ENCODE measurements at regions of chr3 and their contacts with region 1.

Region 1: DNA sequence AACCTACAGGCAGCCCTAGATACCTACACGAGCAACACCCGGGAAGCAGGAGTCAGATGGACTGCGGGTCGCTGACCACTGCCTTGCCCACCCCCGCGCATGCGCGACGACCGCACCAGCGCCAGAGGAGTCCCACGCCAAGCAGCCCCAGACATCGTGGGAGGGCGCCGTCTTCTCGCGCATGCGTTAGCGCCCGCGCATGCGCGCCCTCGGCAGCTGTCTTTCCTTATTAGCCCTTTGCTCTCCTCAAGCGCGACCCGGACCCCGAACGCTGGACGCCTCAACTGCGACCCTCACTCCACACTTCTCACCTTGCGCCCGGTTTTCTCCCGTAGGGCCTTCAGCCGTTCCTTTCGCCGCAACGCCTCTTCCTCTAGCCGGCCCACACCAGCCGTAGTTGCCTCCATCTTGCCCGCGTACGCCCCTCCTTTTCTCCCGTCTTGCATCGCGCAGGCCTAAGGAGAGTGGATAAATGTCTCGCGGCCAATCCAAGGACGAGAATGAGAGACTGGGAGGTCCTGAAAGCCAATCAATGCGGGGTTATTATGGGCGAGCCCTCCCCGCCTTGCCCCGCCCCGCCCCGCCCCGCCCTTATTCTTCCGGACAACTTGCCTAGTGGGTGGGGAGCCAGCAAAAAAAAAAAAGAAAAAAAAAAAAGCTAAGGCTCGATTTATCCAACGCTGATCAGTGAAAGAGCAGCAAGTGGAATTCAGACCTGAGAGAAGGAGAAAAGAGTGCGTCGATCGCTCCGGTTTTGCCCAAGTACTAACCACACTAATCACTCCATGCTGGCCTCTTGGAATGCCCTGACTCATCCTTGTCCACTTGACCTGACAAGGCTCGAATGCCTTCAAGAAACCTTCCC is at the start of gene CCDC12:
- DNase-seq: peak; percentile 79 to 98 (median 96)
- ATAC-seq: peak; percentile 87
- H3K4me3 ChIP-seq: peak within 1 kb of the TSS; percentile 98
- H3K4me3 Mint-ChIP-seq: peak within 1 kb of the TSS; percentile 95 to 100 (median 99)
- H3K27ac ChIP-seq: peak within 1 kb of the TSS; percentile 90
- H3K27ac Mint-ChIP-seq: peak within 1 kb of the TSS; percentile 94 to 99 (median 98)
- H3K4me1 ChIP-seq: peaks cover 46 to 53% of the 10 kb centered on the region in 2 donors
- H3K4me1 Mint-ChIP-seq: peaks cover 44 to 82% (median 63%) of the 10 kb centered on the region in 7 donors
- H3K27me3 ChIP-seq: no peaks in the 10 kb centered on the region
- H3K27me3 Mint-ChIP-seq: no peaks in the 10 kb centered on the region
- total RNA-seq, gene CCDC12: 51.6 to 61.5 (median 56.9) TPM

Region 2: DNA sequence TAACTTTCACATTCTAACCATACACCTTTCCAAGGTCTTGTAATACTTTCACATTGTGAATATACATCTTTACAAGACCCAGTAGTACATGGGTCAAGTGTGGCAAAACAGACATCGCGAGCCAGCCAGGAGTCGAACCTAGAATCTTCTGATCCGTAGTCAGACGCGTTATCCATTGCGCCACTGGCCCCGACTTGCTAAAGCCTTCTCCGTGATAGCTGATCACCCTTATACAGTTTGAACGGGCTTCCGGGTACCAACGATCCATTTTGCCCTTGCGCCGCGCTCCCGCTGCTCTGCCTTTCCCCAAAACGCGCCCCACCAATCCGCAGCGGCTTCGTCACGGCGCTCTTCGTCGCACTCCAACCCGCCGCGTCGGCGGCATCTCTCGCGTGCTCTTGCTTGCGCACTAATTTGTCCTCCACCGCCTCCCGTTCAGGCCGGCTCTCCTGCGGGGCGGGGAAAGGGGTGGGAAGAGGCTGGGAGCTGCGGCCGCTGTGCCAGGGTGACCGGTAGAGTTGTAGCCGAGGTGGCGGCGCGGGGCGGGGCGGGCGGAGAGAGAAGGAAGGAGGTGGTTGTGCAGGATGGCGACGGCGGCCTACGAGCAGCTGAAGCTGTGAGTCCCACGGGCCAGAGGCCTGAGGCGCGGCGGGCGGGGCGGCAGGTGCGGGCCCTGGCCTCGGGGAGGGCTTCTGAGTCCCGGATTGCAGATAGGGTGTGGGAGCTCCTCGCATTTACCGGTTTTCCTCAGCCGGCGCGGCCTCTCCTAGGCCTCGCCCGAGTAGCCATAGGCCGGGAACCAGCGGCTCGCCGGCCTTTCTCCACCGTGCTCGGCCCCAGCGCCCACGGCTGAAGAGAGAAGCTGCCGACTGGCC is 1287.4 kb before region 1 on chr3 and contains the start of gene SACM1L:
- CTCF ChIA-PET with region 1: no interaction called
- POLR2A ChIA-PET with region 1: no interaction called
- intact Hi-C with region 1: loop called in 1 of 2 experiments (anchors 5 kb)
- DNase-seq: peak; percentile 84 to 97 (median 95)
- ATAC-seq: peak; percentile 90
- H3K4me3 ChIP-seq: peak within 1 kb of the TSS; percentile 80
- H3K4me3 Mint-ChIP-seq: peak within 1 kb of the TSS; percentile 87 to 98 (median 95)
- H3K27ac ChIP-seq: peak within 1 kb of the TSS; percentile 96
- H3K27ac Mint-ChIP-seq: peak within 1 kb of the TSS; percentile 96 to 100 (median 99)
- H3K4me1 ChIP-seq: peaks cover 38 to 39% of the 10 kb centered on the region in 2 donors
- H3K4me1 Mint-ChIP-seq: peaks cover 40 to 74% (median 67%) of the 10 kb centered on the region in 7 donors
- H3K27me3 ChIP-seq: no peaks in the 10 kb centered on the region
- H3K27me3 Mint-ChIP-seq: peaks cover 0 to 5% (median 0%) of the 10 kb centered on the region in 5 donors
- total RNA-seq, gene SACM1L: 60.8 to 93.8 (median 70.5) TPM

Region 3: GRCh38 chr3:45712472-45713110 is 1264.0 kb before region 1 on chr3:
- CTCF ChIA-PET with region 1: no interaction called
- POLR2A ChIA-PET with region 1: no interaction called
- intact Hi-C with region 1: no loop called
- DNase-seq: no peak
- ATAC-seq: no peak
- H3K4me3 ChIP-seq: no peak overlapping the region
- H3K4me3 Mint-ChIP-seq: no peak overlapping the region
- H3K27ac ChIP-seq: no peak overlapping the region
- H3K27ac Mint-ChIP-seq: peak overlapping the region in 4 of 9 donors; percentile 3 to 81 (median 34)
- H3K4me1 ChIP-seq: no peaks in the 10 kb centered on the region
- H3K4me1 Mint-ChIP-seq: peaks cover 15 to 29% (median 26%) of the 10 kb centered on the region in 7 donors
- H3K27me3 ChIP-seq: no peaks in the 10 kb centered on the region
- H3K27me3 Mint-ChIP-seq: no peaks in the 10 kb centered on the region

Region 4: GRCh38 chr3:46359733-46360493 is 616.6 kb before region 1 on chr3:
- CTCF ChIA-PET with region 1: no interaction called
- POLR2A ChIA-PET with region 1: no interaction called
- intact Hi-C with region 1: no loop called
- DNase-seq: no peak
- ATAC-seq: peak; percentile 37
- H3K4me3 ChIP-seq: no peak overlapping the region
- H3K4me3 Mint-ChIP-seq: no peak overlapping the region
- H3K27ac ChIP-seq: no peak overlapping the region
- H3K27ac Mint-ChIP-seq: no peak overlapping the region
- H3K4me1 ChIP-seq: peaks cover 3 to 39% of the 10 kb centered on the region in 2 donors
- H3K4me1 Mint-ChIP-seq: peaks cover 0 to 59% (median 13%) of the 10 kb centered on the region in 7 donors
- H3K27me3 ChIP-seq: no peaks in the 10 kb centered on the region
- H3K27me3 Mint-ChIP-seq: peaks cover 0 to 65% (median 5%) of the 10 kb centered on the region in 5 donors

Region 5: GRCh38 chr3:46759239-46760167 is 217.1 kb before region 1 on chr3:
- CTCF ChIA-PET with region 1: no interaction called
- POLR2A ChIA-PET with region 1: no interaction called
- intact Hi-C with region 1: no loop called
- DNase-seq: no peak
- ATAC-seq: no peak
- H3K4me3 ChIP-seq: no peak overlapping the region
- H3K4me3 Mint-ChIP-seq: no peak overlapping the region
- H3K27ac ChIP-seq: no peak overlapping the region
- H3K27ac Mint-ChIP-seq: no peak overlapping the region
- H3K4me1 ChIP-seq: no peaks in the 10 kb centered on the region
- H3K4me1 Mint-ChIP-seq: no peaks in the 10 kb centered on the region
- H3K27me3 ChIP-seq: no peaks in the 10 kb centered on the region
- H3K27me3 Mint-ChIP-seq: peaks cover 7 to 33% (median 9%) of the 10 kb centered on the region in 5 donors

Region 6: DNA sequence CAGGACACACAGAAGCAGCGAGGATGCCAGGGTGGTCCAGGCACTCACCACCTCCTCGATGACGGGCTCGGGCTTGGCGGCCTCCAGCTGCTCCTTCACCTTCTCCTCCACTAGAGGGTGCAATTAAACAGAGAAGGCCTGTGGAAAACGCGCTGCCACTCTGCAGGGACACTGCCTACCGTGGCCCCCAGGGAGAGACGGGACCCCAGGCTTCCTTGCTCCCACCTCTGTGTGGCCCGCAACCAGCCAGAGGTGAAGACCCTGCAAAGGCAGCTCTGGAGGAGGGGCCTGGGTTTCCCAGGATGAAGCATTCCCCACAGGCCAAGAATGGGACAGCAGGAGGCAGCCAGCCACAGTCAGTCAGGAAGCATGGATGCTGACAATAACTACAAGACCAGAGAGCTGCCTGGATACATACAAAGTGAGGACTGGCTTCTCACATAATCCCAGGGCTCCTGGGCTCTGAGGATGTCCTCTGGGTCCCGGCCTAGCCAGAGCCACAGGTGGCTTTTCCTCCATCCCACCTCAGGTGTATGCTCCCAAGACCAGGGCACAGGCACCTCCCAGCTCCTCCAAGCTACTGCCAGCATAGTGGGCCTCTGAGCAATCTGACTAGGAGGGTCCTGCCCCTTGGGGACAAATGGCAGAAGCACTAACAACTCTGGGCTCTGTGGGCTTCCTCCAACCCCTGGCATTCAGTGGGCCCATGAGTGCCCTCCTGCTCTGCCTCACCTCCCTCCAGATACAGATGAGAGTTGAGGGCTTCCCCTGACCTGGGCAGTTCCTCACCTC is 52.8 kb before region 1 on chr3:
- CTCF ChIA-PET with region 1: interaction called, 3 read pairs
- POLR2A ChIA-PET with region 1: no interaction called
- intact Hi-C with region 1: loop called in 1 of 2 experiments (anchors 5 kb)
- DNase-seq: peak in 6 of 9 donors; percentile 18 to 52 (median 44)
- ATAC-seq: peak; percentile 61
- H3K4me3 ChIP-seq: no peak overlapping the region
- H3K4me3 Mint-ChIP-seq: no peak overlapping the region
- H3K27ac ChIP-seq: no peak overlapping the region
- H3K27ac Mint-ChIP-seq: peak overlapping the region in 5 of 9 donors; percentile 31 to 54 (median 43)
- H3K4me1 ChIP-seq: peaks cover 19 to 30% of the 10 kb centered on the region in 2 donors
- H3K4me1 Mint-ChIP-seq: peaks cover 13 to 40% (median 28%) of the 10 kb centered on the region in 7 donors
- H3K27me3 ChIP-seq: no peaks in the 10 kb centered on the region
- H3K27me3 Mint-ChIP-seq: no peaks in the 10 kb centered on the region

Region 7: GRCh38 chr3:46998121-46998851 is 21.7 kb after region 1 on chr3:
- CTCF ChIA-PET with region 1: interaction called, 9 read pairs
- POLR2A ChIA-PET with region 1: interaction called, 5 read pairs
- intact Hi-C with region 1: loop called (anchors 1 kb)
- DNase-seq: peak; percentile 53 to 84 (median 69)
- ATAC-seq: peak; percentile 85
- H3K4me3 ChIP-seq: no peak overlapping the region
- H3K4me3 Mint-ChIP-seq: no peak overlapping the region
- H3K27ac ChIP-seq: no peak overlapping the region
- H3K27ac Mint-ChIP-seq: peak overlapping the region in 5 of 9 donors; percentile 41 to 79 (median 55)
- H3K4me1 ChIP-seq: peaks cover 0 to 10% of the 10 kb centered on the region in 2 donors
- H3K4me1 Mint-ChIP-seq: peaks cover 7 to 18% (median 11%) of the 10 kb centered on the region in 7 donors
- H3K27me3 ChIP-seq: no peaks in the 10 kb centered on the region
- H3K27me3 Mint-ChIP-seq: no peaks in the 10 kb centered on the region

Region 8: GRCh38 chr3:47057212-47057671 is 80.7 kb after region 1 on chr3:
- CTCF ChIA-PET with region 1: no interaction called
- POLR2A ChIA-PET with region 1: interaction called, 3 read pairs
- intact Hi-C with region 1: loop called in 1 of 2 experiments (anchors 5 kb)
- DNase-seq: peak in 8 of 9 donors; percentile 32 to 75 (median 58)
- ATAC-seq: peak; percentile 88
- H3K4me3 ChIP-seq: no peak overlapping the region
- H3K4me3 Mint-ChIP-seq: peak overlapping the region in 9 of 10 donors; percentile 15 to 60 (median 45)
- H3K27ac ChIP-seq: peak overlapping the region; percentile 23
- H3K27ac Mint-ChIP-seq: peak overlapping the region; percentile 51 to 91 (median 85)
- H3K4me1 ChIP-seq: peaks cover 15 to 18% of the 10 kb centered on the region in 2 donors
- H3K4me1 Mint-ChIP-seq: peaks cover 23 to 60% (median 47%) of the 10 kb centered on the region in 7 donors
- H3K27me3 ChIP-seq: no peaks in the 10 kb centered on the region
- H3K27me3 Mint-ChIP-seq: no peaks in the 10 kb centered on the region

Region 9: DNA sequence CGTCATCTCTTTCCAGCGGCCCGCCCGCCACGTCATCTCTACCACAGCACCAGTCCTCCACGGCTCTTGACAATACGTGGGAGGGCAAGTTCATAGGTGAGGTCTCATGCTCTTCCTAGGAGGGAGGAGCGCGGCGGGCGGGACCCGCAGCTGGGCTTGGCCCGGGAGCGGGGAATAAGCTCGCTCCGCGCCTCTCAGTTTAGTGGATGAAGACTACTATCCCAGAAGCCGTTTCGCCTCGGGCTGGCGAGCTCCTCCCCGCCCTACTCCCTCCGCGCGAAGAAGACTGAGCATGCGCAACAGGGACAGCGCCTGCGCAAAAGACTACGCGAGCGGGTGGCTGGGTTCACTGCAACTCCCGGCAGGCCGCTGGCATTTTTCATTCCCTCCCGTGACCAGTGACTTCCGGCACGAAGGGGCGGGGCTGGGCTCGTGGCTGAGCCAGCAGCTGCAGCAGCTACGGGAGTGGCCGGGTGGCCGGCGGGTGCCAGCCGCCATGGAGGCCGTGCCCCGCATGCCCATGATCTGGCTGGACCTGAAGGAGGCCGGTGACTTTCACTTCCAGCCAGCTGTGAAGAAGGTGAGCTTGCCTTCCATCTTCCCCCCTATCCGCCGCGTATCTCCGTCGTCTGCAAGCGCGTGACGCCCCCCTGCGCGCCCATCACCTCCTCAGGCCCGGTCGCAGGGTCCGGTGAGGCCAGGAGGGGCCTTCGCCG is 404.2 kb after region 1 on chr3 and contains the start of gene PTPN23:
- CTCF ChIA-PET with region 1: no interaction called
- POLR2A ChIA-PET with region 1: no interaction called
- intact Hi-C with region 1: loop called (anchors 1 kb)
- DNase-seq: peak; percentile 96 to 99 (median 99)
- ATAC-seq: peak; percentile 82
- H3K4me3 ChIP-seq: peak within 1 kb of the TSS; percentile 86
- H3K4me3 Mint-ChIP-seq: peak within 1 kb of the TSS; percentile 90 to 100 (median 98)
- H3K27ac ChIP-seq: peak within 1 kb of the TSS; percentile 92
- H3K27ac Mint-ChIP-seq: peak within 1 kb of the TSS; percentile 92 to 100 (median 99)
- H3K4me1 ChIP-seq: peaks cover 23 to 26% of the 10 kb centered on the region in 2 donors
- H3K4me1 Mint-ChIP-seq: peaks cover 40 to 56% (median 48%) of the 10 kb centered on the region in 7 donors
- H3K27me3 ChIP-seq: no peaks in the 10 kb centered on the region
- H3K27me3 Mint-ChIP-seq: peaks cover 0 to 2% (median 0%) of the 10 kb centered on the region in 5 donors
- total RNA-seq, gene PTPN23: 35.8 to 51.2 (median 38.5) TPM

Measured in naive thymus-derived CD4-positive, alpha-beta T cell (primary cell).